Endothelial cell of umbilical vein (primary cell): ENCODE measurements at regions of chr3 and their contacts with region 1.

Region 1: DNA sequence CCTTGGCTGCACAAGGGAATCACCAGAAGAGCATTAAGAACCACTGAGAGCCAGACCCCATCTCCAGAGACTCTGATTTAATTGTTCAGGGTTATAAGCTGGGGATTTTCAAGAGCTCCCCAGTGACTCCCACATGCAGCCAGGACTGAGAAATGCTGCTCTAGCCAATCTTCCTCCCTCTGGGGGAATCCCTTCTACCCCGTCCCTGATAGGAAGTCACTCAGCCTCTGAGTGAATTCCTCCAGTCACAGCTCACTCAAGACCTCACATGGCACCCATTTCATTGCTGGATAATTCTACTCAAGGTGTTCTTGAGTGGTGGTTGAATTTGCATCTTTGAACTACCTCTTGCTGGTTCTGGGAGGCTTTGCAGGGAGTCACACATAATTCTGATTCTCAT is 10.7 kb downstream of the CCR3 start:
- DNase-seq: no peak
- H3K4me3 ChIP-seq: no peak overlapping the region
- H3K27ac ChIP-seq: no peak overlapping the region
- H3K4me1 ChIP-seq: no peaks in the 10 kb centered on the region
- H3K27me3 ChIP-seq: peaks cover 0 to 2% of the 10 kb centered on the region in 2 experiments
- CTCF ChIP-seq: no peak
- POLR2A ChIP-seq: no peak

Region 2: GRCh38 chr3:46130631-46131288 is 122.2 kb before region 1 on chr3:
- CTCF ChIA-PET with region 1: no interaction called
- POLR2A ChIA-PET with region 1: no interaction called
- dilution Hi-C with region 1: no loop called
- intact Hi-C with region 1: loop called (anchors 1 kb)
- DNase-seq: no peak
- H3K4me3 ChIP-seq: no peak overlapping the region
- H3K27ac ChIP-seq: no peak overlapping the region
- H3K4me1 ChIP-seq: no peaks in the 10 kb centered on the region
- H3K27me3 ChIP-seq: peaks cover 0 to 3% of the 10 kb centered on the region in 2 experiments
- CTCF ChIP-seq: no peak
- POLR2A ChIP-seq: no peak